ENCODE measurements at regions of chr16 and their contacts with region 1.

Region 1: DNA sequence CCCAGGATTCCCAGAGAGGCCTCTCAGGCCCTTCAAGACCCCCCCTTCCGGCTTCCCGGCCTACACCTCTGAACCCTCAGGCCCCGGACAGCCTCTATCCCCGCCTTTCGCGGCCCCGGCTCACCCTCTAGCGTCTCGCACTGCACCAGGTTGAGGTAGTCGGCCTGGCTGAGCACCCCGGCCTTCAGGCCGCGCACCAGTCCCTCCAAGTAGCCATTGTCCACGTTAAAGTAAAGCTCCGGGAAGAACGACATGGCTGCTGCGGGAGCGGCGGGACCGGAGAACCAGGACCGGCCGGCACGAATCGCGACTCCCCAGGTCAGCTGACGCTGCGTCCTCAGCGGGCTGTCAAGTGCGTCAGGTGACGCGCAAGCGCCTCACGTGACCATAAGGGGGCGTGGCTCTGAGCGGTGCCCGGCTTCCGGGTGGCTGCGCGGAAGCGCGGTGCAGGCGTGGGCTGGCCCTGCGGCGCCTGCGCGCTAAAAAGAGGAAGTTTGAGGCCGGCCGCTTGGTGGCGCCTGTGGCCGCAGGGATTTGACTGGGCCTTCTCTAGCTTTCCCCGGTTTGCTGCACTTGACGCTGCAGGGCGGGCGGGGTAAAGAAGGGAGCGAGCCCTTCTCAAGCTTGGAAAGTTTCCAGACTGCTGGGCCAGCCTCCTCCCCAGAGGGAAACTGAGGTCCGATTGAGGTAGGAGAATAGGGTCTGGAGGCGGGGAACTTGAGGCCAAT is at the start of gene ATP6V0D1:
- DNase-seq: peak; percentile 98 to 100 (median 99)
- H3K4me3 ChIP-seq: peak within 1 kb of the TSS; percentile 67 to 98 (median 84)
- H3K4me3 Mint-ChIP-seq: peak within 1 kb of the TSS; percentile 98
- H3K27ac ChIP-seq: peak within 1 kb of the TSS; percentile 98 to 99
- H3K27ac Mint-ChIP-seq: peak within 1 kb of the TSS; percentile 99 to 100 (median 100)
- H3K4me1 ChIP-seq: peaks cover 69 to 89% of the 10 kb centered on the region in 2 donors
- H3K4me1 Mint-ChIP-seq: peaks cover 78% of the 10 kb centered on the region
- H3K27me3 ChIP-seq: no peaks in the 10 kb centered on the region
- H3K27me3 Mint-ChIP-seq: peaks cover 0 to under 1% (median 0%) of the 10 kb centered on the region in 3 donors
- CTCF ChIP-seq: peak; percentile 76
- polyA plus RNA-seq, gene ATP6V0D1: 354 to 687 (median 631) TPM

Region 2: DNA sequence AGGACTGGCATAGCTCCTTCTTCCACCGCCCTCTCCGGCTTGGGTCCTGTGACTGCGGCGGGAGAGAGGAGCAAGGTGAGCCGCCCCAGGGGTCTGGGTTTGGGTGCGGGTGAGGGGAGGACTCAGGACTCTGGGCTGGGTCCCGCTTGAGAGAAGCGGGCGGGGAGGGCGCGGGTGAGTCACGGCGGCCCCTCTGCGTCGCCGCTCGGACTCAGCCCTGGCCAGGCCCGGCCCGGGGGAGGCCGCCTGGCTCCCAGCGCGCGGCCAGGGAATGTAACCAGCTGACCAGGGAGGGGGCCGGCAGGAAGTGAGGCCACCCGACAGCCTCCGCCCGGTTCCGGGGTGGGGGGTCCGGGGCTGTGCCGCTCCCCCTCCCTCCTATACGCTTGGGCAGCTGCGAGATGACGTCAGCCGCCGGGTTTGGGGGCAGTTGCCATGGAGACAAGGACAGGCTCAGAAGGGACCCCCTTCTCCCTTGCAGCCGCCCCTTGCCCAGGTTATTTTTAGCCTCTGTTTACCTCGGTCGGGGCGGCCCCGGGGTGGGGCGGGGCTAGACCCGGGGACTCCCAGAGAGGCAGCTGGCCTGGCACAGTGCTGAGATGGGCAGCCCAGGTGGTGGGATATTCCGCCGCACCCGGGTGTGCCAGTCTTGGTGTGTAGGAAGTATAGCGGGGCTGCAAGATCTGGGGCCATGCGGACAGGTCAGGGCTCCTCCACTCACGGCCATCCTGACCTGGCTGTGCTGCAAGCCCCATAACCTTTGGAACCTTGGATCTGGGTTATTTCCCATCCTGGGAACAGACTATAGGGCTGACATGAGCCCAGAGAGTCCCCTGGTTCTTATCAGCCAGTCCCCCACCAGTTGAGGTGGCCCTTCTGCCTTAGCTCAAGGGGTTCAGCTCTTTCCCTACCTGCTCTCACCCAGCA is 49.3 kb after region 1 on chr16:
- intact Hi-C with region 1: loop called in 1 of 2 experiments (anchors 5 kb)
- DNase-seq: peak; percentile 68 to 81 (median 78)
- H3K4me3 ChIP-seq: peak overlapping the region; percentile 58 to 96 (median 88)
- H3K4me3 Mint-ChIP-seq: peak overlapping the region; percentile 94 to 100
- H3K27ac ChIP-seq: peak overlapping the region; percentile 95
- H3K27ac Mint-ChIP-seq: peak overlapping the region; percentile 96 to 98 (median 96)
- H3K4me1 ChIP-seq: peaks cover 40 to 67% of the 10 kb centered on the region in 2 donors
- H3K4me1 Mint-ChIP-seq: peaks cover 55% of the 10 kb centered on the region
- H3K27me3 ChIP-seq: peaks cover 0 to 1% of the 10 kb centered on the region in 2 donors
- H3K27me3 Mint-ChIP-seq: peaks cover 7 to 24% (median 16%) of the 10 kb centered on the region in 3 donors
- CTCF ChIP-seq: no peak

Region 3: GRCh38 chr16:67660564-67661028 is 179.6 kb after region 1 on chr16 and contains the start of gene PARD6A:
- intact Hi-C with region 1: no loop called
- DNase-seq: peak; percentile 95 to 96 (median 96)
- H3K4me3 ChIP-seq: peak within 1 kb of the TSS; percentile 74 to 92 (median 92)
- H3K4me3 Mint-ChIP-seq: peak within 1 kb of the TSS; percentile 90 to 92
- H3K27ac ChIP-seq: peak within 1 kb of the TSS; percentile 87 to 94
- H3K27ac Mint-ChIP-seq: peak within 1 kb of the TSS; percentile 96 to 99 (median 98)
- H3K4me1 ChIP-seq: peaks cover 20 to 30% of the 10 kb centered on the region in 2 donors
- H3K4me1 Mint-ChIP-seq: peaks cover 21% of the 10 kb centered on the region
- H3K27me3 ChIP-seq: peaks cover 0 to 5% of the 10 kb centered on the region in 2 donors
- H3K27me3 Mint-ChIP-seq: peaks cover 8 to 11% (median 10%) of the 10 kb centered on the region in 3 donors
- CTCF ChIP-seq: no peak
- polyA plus RNA-seq, gene PARD6A: 2.7 to 6.9 (median 6.1) TPM